ENCODE measurements at regions of chr16 and their contacts with region 1.

Region 1: GRCh38 chr16:68085259-68086071 is at the start of gene NFATC3:
- DNase-seq: peak; percentile 96
- ATAC-seq: peak; percentile 50
- H3K4me3 ChIP-seq: peak within 1 kb of the TSS; percentile 90 to 98 (median 96)
- H3K27ac ChIP-seq: peak within 1 kb of the TSS; percentile 99
- H3K4me1 ChIP-seq: peaks cover 67% of the 10 kb centered on the region
- H3K27me3 ChIP-seq: no peaks in the 10 kb centered on the region; a peak in 1 of 5 replicates
- CTCF ChIP-seq: no peak
- EP300 ChIP-seq: peak in 1 of 2 experiments; percentile 6; a peak in 1 of 4 replicates
- POLR2A ChIP-seq: peak in 1 of 2 experiments; percentile 61; a peak in 2 of 4 replicates
- RAD21 ChIP-seq: peak; percentile 70
- total RNA-seq, gene NFATC3: 52.6 and 63.2 TPM in 2 replicates

Region 2: DNA sequence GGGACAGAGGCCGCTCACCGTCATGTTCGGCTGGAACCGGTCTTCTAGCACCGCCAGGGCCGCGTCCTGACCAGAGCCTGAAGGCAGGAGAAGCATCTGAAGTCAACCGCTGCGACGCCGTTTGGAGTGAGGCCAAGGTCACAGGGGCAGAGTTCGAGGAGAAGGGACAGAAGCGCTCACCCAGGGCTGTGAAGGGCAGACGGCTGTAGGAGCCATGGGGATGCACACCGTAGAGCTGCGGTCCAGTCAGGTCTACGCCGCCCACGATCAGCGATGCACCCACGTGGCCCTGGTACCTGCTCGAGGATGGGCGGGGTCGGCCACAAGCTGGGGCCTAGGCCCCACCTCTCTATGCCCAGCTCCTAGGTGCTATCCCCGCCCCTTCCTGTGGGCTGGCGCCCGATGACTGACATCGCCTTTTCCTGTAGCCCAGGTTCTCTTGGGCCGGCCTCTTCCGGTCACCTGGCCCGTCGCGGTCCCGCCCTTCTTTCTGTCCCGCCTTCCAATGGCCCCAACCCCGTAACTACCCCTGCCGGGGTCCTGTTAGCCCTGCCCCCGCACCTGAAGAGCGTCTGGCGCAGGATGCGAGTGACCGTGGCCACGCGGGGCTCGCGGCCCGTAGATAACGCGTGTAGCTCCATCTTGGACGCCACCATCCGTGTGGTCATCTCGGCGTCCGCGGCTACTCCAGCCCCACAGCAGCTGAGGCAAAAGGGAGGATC is 149.9 kb before region 1 on chr16:
- CTCF ChIA-PET with region 1: no interaction called
- POLR2A ChIA-PET with region 1: interaction called, 17 read pairs
- in situ Hi-C with region 1: no loop called
- intact Hi-C with region 1: no loop called
- DNase-seq: peak; percentile 98
- ATAC-seq: peak; percentile 85
- H3K4me3 ChIP-seq: peak overlapping the region; percentile 86 to 97 (median 97)
- H3K27ac ChIP-seq: peak overlapping the region; percentile 70
- H3K4me1 ChIP-seq: peaks cover 30% of the 10 kb centered on the region
- H3K27me3 ChIP-seq: no peaks in the 10 kb centered on the region; a peak in 1 of 5 replicates
- CTCF ChIP-seq: peak; percentile 27
- EP300 ChIP-seq: no peak
- POLR2A ChIP-seq: peak in 1 of 2 experiments; percentile 79; a peak in 2 of 4 replicates
- RAD21 ChIP-seq: peak; percentile 34; the same call in 1 of the 2 replicates

Region 3: GRCh38 chr16:68022704-68023522 is 62.6 kb before region 1 on chr16 and contains the starts of genes DDX28 and DUS2:
- CTCF ChIA-PET with region 1: no interaction called
- POLR2A ChIA-PET with region 1: interaction called, 26 read pairs
- in situ Hi-C with region 1: no loop called
- intact Hi-C with region 1: no loop called
- DNase-seq: peak; percentile 88
- ATAC-seq: peak; percentile 88
- H3K4me3 ChIP-seq: peak within 1 kb of the TSS; percentile 92 to 99 (median 92)
- H3K27ac ChIP-seq: peak within 1 kb of the TSS; percentile 83
- H3K4me1 ChIP-seq: peaks cover 24% of the 10 kb centered on the region
- H3K27me3 ChIP-seq: no peaks in the 10 kb centered on the region; a peak in 1 of 5 replicates
- CTCF ChIP-seq: peak; percentile 34; the same call in 1 of the 2 replicates
- EP300 ChIP-seq: peak; percentile 37 to 77; a peak in 2 of 4 replicates
- POLR2A ChIP-seq: peak; percentile 88 to 92
- RAD21 ChIP-seq: peak; percentile 38; the same call in 1 of the 2 replicates
- total RNA-seq, gene DDX28: 16.4 and 18.4 TPM in 2 replicates
- total RNA-seq, gene DUS2: 25.1 and 25.9 TPM in 2 replicates

Region 4: GRCh38 chr16:68033101-68033500 is 52.4 kb before region 1 on chr16:
- CTCF ChIA-PET with region 1: no interaction called
- POLR2A ChIA-PET with region 1: no interaction called
- in situ Hi-C with region 1: no loop called
- intact Hi-C with region 1: no loop called
- DNase-seq: no peak
- ATAC-seq: no peak
- H3K4me3 ChIP-seq: no peak overlapping the region
- H3K27ac ChIP-seq: no peak overlapping the region
- H3K4me1 ChIP-seq: no peaks in the 10 kb centered on the region
- H3K27me3 ChIP-seq: no peaks in the 10 kb centered on the region
- CTCF ChIP-seq: no peak
- EP300 ChIP-seq: no peak
- POLR2A ChIP-seq: no peak
- RAD21 ChIP-seq: no peak

Region 5: GRCh38 chr16:68116256-68116867 is 30.9 kb after region 1 on chr16:
- CTCF ChIA-PET with region 1: no interaction called
- POLR2A ChIA-PET with region 1: interaction called, 65 read pairs
- in situ Hi-C with region 1: no loop called
- intact Hi-C with region 1: no loop called
- DNase-seq: no peak
- ATAC-seq: no peak
- H3K4me3 ChIP-seq: no peak overlapping the region
- H3K27ac ChIP-seq: no peak overlapping the region
- H3K4me1 ChIP-seq: peaks cover 71% of the 10 kb centered on the region
- H3K27me3 ChIP-seq: no peaks in the 10 kb centered on the region
- CTCF ChIP-seq: peak; percentile 25; the same call in 1 of the 2 replicates
- EP300 ChIP-seq: no peak
- POLR2A ChIP-seq: no peak
- RAD21 ChIP-seq: no peak

Region 6: GRCh38 chr16:68257906-68258800 is 172.7 kb after region 1 on chr16:
- CTCF ChIA-PET with region 1: no interaction called
- POLR2A ChIA-PET with region 1: interaction called, 13 read pairs
- in situ Hi-C with region 1: no loop called
- intact Hi-C with region 1: no loop called
- DNase-seq: peak; percentile 95
- ATAC-seq: peak; percentile 89
- H3K4me3 ChIP-seq: peak overlapping the region in 1 of 3 experiments; percentile 47; a peak in 2 of 6 replicates
- H3K27ac ChIP-seq: peak overlapping the region; percentile 87
- H3K4me1 ChIP-seq: peaks cover 45% of the 10 kb centered on the region
- H3K27me3 ChIP-seq: no peaks in the 10 kb centered on the region
- CTCF ChIP-seq: peak; percentile 34; the same call in 1 of the 2 replicates
- EP300 ChIP-seq: peak; percentile 42 to 68; a peak in 3 of 4 replicates
- POLR2A ChIP-seq: peak; percentile 19 to 24; a peak in 1 of 4 replicates
- RAD21 ChIP-seq: no peak

Region 7: GRCh38 chr16:68319185-68319908 is 233.9 kb after region 1 on chr16:
- CTCF ChIA-PET with region 1: no interaction called
- POLR2A ChIA-PET with region 1: no interaction called
- in situ Hi-C with region 1: no loop called
- intact Hi-C with region 1: no loop called
- DNase-seq: no peak
- ATAC-seq: no peak
- H3K4me3 ChIP-seq: no peak overlapping the region
- H3K27ac ChIP-seq: no peak overlapping the region
- H3K4me1 ChIP-seq: peaks cover 7% of the 10 kb centered on the region
- H3K27me3 ChIP-seq: no peaks in the 10 kb centered on the region
- CTCF ChIP-seq: no peak
- EP300 ChIP-seq: no peak
- POLR2A ChIP-seq: no peak
- RAD21 ChIP-seq: no peak

Measured in HepG2 (cell line).